Activated naive CD4-positive, alpha-beta T cell treated with anti-CD3 and anti-CD28 coated beads for 36 hours (primary cell): ENCODE measurements at regions of chr11 and their contacts with region 1.

Region 1: GRCh38 chr11:72483412-72484186 is 49.3 kb upstream of the CLPB start:
- DNase-seq: peak; percentile 52
- H3K4me3 Mint-ChIP-seq: no peak overlapping the region
- H3K27ac Mint-ChIP-seq: peak overlapping the region; percentile 26
- H3K4me1 Mint-ChIP-seq: peaks cover 7% of the 10 kb centered on the region
- H3K27me3 Mint-ChIP-seq: no peaks in the 10 kb centered on the region

Region 2: GRCh38 chr11:72519220-72519881 is 35.8 kb after region 1 on chr11:
- CTCF ChIA-PET with region 1: no interaction called
- intact Hi-C with region 1: loop called (anchors 2 kb)
- DNase-seq: peak; percentile 18
- H3K4me3 Mint-ChIP-seq: peak overlapping the region; percentile 53
- H3K27ac Mint-ChIP-seq: peak overlapping the region; percentile 46
- H3K4me1 Mint-ChIP-seq: peaks cover 21% of the 10 kb centered on the region
- H3K27me3 Mint-ChIP-seq: no peaks in the 10 kb centered on the region

Region 3: DNA sequence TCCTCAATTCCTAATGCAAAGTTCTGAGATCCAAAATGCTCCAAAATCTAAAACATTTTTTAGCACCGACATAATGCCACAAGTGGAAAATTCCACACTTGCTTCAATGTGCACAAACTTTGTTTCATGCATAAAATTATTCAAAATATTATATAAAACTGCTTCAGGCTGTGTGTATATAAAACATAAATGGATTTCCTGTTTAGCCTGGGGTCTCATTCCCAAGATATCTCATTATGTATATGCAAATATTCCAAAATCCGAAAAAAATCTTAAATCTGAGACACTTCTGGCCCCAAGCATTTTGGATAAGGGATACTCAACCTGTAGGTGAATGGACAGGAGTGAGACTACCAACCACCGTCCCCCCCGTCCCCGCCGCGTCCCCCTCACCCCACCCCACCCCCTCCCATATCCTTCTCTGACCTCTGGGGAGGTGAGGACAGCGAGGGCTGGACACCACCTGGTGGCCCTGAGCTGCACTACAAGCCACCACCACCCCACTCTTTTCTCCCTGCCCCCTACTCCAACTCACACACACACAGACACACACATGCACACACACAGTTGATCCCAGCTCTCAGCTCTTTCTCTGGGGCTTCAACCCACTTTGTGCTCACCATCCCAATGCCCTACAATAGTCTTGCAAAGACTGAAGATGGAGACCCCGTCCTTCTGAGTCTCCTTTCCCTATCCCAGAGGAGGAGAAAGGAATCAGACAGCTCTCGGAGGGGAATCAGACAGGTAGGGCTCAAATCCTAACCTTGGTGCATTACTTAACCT is 89.7 kb after region 1 on chr11:
- CTCF ChIA-PET with region 1: interaction called, 8 read pairs
- intact Hi-C with region 1: loop called (anchors 1 kb)
- DNase-seq: peak; percentile 43
- H3K4me3 Mint-ChIP-seq: no peak overlapping the region
- H3K27ac Mint-ChIP-seq: no peak overlapping the region
- H3K4me1 Mint-ChIP-seq: no peaks in the 10 kb centered on the region
- H3K27me3 Mint-ChIP-seq: peaks cover 6% of the 10 kb centered on the region

Region 4: GRCh38 chr11:72683782-72684200 is 200.2 kb after region 1 on chr11:
- CTCF ChIA-PET with region 1: interaction called, 4 read pairs
- intact Hi-C with region 1: loop called (anchors 2 kb)
- DNase-seq: peak; percentile 81
- H3K4me3 Mint-ChIP-seq: no peak overlapping the region
- H3K27ac Mint-ChIP-seq: no peak overlapping the region
- H3K4me1 Mint-ChIP-seq: peaks cover 13% of the 10 kb centered on the region
- H3K27me3 Mint-ChIP-seq: no peaks in the 10 kb centered on the region